Activated CD4-positive, alpha-beta T cell treated with anti-CD3 and anti-CD28 coated beads, Interleukin-2, amount 10 ng/mL, durations not matched to agents 24 days and 14 days (primary cell): ENCODE measurements at regions of chr1 and their contacts with region 1.

Region 1: DNA sequence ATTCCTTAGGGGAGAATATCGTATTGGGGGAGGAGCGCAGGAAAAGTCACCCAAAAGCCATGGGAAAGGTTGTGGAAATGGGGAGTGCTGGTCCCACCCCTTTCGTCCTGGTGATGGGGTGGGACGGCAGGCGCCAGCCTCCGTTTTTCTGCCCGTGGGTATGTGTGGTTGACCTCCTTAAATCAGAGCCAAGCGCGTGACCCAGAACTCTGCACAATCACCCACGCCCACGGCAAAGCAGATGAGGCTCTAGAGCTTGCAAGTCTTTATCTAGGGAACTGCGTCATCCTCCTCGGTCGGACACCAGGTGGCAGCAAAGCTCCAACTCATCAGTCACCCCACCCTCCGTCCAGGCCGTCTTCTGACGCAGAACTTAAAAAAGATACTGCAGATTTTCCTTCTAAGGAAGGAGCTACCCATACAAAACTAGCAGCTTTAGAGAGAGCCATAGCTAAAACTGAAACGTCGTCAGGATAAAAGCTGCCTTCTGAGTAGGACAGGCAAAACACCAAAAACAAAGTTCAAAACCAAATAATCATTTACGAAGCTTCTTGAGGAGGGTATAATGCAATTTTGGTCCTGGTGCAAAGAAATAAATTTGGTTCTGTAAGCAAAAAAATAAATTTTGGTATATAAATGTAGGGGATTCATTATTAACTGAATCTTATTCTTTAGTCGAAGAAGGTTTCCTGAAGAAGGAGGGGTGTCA is 62.0 kb downstream of the TBX19 start:
- DNase-seq: peak; percentile 95
- H3K4me3 Mint-ChIP-seq: peak overlapping the region; percentile 35
- H3K27ac Mint-ChIP-seq: peak overlapping the region; percentile 57
- H3K4me1 Mint-ChIP-seq: peaks cover 38% of the 10 kb centered on the region
- H3K27me3 Mint-ChIP-seq: no peaks in the 10 kb centered on the region

Region 2: GRCh38 chr1:168360151-168361021 is 17.7 kb after region 1 on chr1:
- intact Hi-C with region 1: loop called (anchors 1 kb)
- DNase-seq: peak; percentile 75
- H3K4me3 Mint-ChIP-seq: peak overlapping the region; percentile 3
- H3K27ac Mint-ChIP-seq: peak overlapping the region; percentile 46
- H3K4me1 Mint-ChIP-seq: peaks cover 29% of the 10 kb centered on the region
- H3K27me3 Mint-ChIP-seq: peaks cover 12% of the 10 kb centered on the region

Region 3: DNA sequence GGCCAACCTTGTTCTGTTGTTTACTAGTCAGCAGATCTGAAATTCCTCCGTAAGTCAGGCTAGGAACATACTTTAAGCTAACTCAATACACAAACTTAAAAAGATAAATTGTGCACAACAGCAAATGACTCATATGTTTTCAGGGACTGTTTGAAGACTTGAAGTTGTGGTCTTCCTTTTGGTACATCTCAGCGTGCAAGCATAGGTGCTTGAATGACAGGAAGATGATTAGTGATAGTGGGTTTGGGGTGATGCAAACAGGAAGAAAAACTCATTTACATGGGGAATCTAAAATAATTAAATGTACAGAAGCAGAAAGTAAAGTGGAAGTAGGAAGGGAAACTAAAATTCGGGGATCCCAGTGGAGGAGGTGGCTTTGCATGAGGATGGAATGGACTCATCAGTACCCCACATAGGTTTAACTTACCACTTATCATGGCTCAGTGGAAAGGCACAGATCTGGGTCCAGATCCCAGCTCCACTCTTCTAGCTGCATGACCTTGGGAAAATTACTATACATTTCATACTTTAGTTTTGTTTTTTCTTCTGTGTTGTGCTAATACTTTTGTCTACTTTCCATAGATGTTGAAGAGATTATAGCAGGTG is 78.8 kb after region 1 on chr1:
- intact Hi-C with region 1: loop called (anchors 5 kb)
- DNase-seq: peak; percentile 76
- H3K4me3 Mint-ChIP-seq: peak overlapping the region; percentile 44
- H3K27ac Mint-ChIP-seq: peak overlapping the region; percentile 52
- H3K4me1 Mint-ChIP-seq: peaks cover 15% of the 10 kb centered on the region
- H3K27me3 Mint-ChIP-seq: peaks cover 3% of the 10 kb centered on the region

Region 4: GRCh38 chr1:168520052-168520751 is 177.5 kb after region 1 on chr1:
- intact Hi-C with region 1: loop called (anchors 5 kb)
- DNase-seq: peak; percentile 81
- H3K4me3 Mint-ChIP-seq: peak overlapping the region; percentile 79
- H3K27ac Mint-ChIP-seq: peak overlapping the region; percentile 91
- H3K4me1 Mint-ChIP-seq: peaks cover 51% of the 10 kb centered on the region
- H3K27me3 Mint-ChIP-seq: no peaks in the 10 kb centered on the region

Region 5: GRCh38 chr1:169044296-169044695 is 701.6 kb after region 1 on chr1:
- intact Hi-C with region 1: loop called (anchors 5 kb)
- DNase-seq: peak; percentile 87
- H3K4me3 Mint-ChIP-seq: peak overlapping the region; percentile 70
- H3K27ac Mint-ChIP-seq: peak overlapping the region; percentile 83
- H3K4me1 Mint-ChIP-seq: peaks cover 65% of the 10 kb centered on the region
- H3K27me3 Mint-ChIP-seq: no peaks in the 10 kb centered on the region

Region 6: DNA sequence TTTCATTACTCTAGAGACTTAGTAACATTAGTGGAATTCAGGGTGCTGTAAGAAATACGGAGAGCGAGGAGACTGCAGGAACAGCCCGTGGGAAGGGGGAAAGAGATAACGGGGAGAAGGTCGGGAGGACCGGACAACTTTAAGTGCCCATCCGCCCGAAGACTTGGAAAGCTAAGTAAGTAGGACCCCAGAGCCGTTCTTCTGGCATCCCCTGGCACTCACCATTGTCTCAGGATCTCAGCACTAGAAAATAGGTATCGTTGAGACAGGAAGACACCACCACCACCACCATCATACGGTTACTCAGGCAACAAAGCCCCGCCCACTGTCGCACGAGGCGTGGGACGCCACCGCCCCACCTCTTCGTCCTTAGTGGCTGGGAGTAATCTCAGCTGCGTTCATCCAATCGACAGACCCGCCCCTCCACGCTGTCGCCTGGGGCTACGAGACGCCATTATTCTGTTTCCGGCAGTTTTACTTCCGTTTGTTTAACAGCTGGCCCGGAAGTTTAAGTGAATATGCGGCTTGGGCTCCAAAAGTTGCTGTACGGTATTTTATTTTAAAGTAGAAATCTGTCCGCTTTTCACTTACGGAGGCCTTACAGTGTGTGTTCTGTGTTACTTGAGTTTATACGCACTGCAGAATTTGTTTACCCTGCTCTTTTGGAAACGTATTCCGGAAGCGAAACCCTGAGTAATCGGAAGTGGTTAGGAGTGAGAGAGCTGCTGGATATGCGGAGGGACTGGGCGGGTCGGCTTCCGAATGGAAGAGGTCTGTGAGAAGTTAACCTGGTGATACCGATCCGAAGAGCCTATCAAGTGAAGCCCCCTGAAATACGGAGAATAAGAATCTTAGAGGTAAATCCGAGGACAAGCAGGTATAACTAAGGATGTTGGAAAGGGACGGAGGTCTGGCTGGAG is 1025.0 kb after region 1 on chr1 and contains the starts of genes BLZF1 and NME7:
- intact Hi-C with region 1: loop called (anchors 5 kb)
- DNase-seq: peak; percentile 100
- H3K4me3 Mint-ChIP-seq: peak within 1 kb of the TSS; percentile 73
- H3K27ac Mint-ChIP-seq: peak within 1 kb of the TSS; percentile 26
- H3K4me1 Mint-ChIP-seq: peaks cover 35% of the 10 kb centered on the region
- H3K27me3 Mint-ChIP-seq: no peaks in the 10 kb centered on the region
- total RNA-seq, gene BLZF1: 11.2 and 11.3 TPM in 2 replicates
- total RNA-seq, gene NME7: 10.6 and 13.8 TPM in 2 replicates